ENCODE measurements at regions of chr19 and their contacts with region 1.

Region 1: GRCh38 chr19:57410877-57411671 is at the start of gene ZNF17:
- DNase-seq: peak; percentile 91
- H3K4me3 ChIP-seq: peak within 1 kb of the TSS; percentile 75 to 88 (median 87)
- H3K27ac ChIP-seq: peak within 1 kb of the TSS; percentile 30
- H3K4me1 ChIP-seq: no peaks in the 10 kb centered on the region
- H3K27me3 ChIP-seq: no peaks in the 10 kb centered on the region
- CTCF ChIP-seq: no peak
- total RNA-seq, gene ZNF17: 6.0 to 13.8 TPM

Region 2: DNA sequence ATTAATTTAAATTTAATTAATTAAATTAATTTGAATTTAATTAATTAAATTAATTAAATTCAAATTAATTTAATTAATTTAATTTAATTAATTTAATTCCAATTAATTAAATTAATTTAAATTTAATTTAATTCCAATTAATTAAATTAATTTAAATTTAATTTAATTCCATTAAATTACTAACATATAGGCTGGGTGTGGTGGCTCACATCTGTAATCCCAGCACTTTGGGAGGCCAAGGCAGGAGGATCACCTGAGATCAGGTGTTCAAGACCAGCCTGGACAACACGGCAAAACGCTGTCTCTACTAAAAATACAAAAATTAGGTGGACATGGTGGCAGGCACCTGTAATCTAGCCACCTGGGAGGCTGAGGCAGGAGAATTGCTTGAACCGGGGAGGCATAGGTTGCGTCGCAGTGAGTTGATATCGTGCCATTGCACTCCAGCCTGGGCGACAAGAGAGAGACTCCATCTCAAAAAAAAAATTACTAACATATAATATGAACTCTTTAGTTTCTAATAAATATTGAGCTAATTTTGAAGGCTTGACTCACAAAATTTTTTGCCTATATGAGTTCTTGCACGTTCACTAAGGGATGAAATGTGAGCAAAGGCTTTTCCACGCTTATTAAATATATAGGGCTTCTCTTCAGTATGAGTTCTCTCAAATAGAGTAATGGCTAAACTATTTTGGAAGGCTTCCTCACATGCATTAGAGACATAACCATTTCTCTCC is 300.3 kb before region 1 on chr19:
- CTCF ChIA-PET with region 1: no interaction called
- dilution Hi-C with region 1: no loop called
- in situ Hi-C with region 1: no loop called
- intact Hi-C with region 1: no loop called
- DNase-seq: no peak
- H3K4me3 ChIP-seq: no peak overlapping the region
- H3K27ac ChIP-seq: no peak overlapping the region
- H3K4me1 ChIP-seq: no peaks in the 10 kb centered on the region
- H3K27me3 ChIP-seq: no peaks in the 10 kb centered on the region
- CTCF ChIP-seq: no peak

Region 3: GRCh38 chr19:57389730-57390598 is 21.1 kb before region 1 on chr19 and contains the start of gene ZNF548:
- CTCF ChIA-PET with region 1: interaction called, 13 read pairs
- dilution Hi-C with region 1: no loop called
- in situ Hi-C with region 1: no loop called
- intact Hi-C with region 1: no loop called
- DNase-seq: peak; percentile 96
- H3K4me3 ChIP-seq: peak within 1 kb of the TSS; percentile 83 to 88 (median 84)
- H3K27ac ChIP-seq: peak within 1 kb of the TSS; percentile 88
- H3K4me1 ChIP-seq: peaks cover 9% of the 10 kb centered on the region
- H3K27me3 ChIP-seq: no peaks in the 10 kb centered on the region
- CTCF ChIP-seq: peak in 1 of 2 donors; percentile 30
- total RNA-seq, gene ZNF548: 15.2 to 25.8 TPM

Region 4: GRCh38 chr19:57527136-57527881 is 116.2 kb after region 1 on chr19 and contains the start of gene ZNF549:
- CTCF ChIA-PET with region 1: no interaction called
- dilution Hi-C with region 1: loop called (anchors 10 kb)
- in situ Hi-C with region 1: no loop called
- intact Hi-C with region 1: loop called (anchors 1 kb)
- DNase-seq: peak; percentile 96
- H3K4me3 ChIP-seq: peak within 1 kb of the TSS; percentile 61 to 77 (median 70)
- H3K27ac ChIP-seq: peak within 1 kb of the TSS; percentile 3
- H3K4me1 ChIP-seq: no peaks in the 10 kb centered on the region
- H3K27me3 ChIP-seq: no peaks in the 10 kb centered on the region
- CTCF ChIP-seq: no peak
- total RNA-seq, gene ZNF549: 6.1 to 7.0 TPM

Region 5: DNA sequence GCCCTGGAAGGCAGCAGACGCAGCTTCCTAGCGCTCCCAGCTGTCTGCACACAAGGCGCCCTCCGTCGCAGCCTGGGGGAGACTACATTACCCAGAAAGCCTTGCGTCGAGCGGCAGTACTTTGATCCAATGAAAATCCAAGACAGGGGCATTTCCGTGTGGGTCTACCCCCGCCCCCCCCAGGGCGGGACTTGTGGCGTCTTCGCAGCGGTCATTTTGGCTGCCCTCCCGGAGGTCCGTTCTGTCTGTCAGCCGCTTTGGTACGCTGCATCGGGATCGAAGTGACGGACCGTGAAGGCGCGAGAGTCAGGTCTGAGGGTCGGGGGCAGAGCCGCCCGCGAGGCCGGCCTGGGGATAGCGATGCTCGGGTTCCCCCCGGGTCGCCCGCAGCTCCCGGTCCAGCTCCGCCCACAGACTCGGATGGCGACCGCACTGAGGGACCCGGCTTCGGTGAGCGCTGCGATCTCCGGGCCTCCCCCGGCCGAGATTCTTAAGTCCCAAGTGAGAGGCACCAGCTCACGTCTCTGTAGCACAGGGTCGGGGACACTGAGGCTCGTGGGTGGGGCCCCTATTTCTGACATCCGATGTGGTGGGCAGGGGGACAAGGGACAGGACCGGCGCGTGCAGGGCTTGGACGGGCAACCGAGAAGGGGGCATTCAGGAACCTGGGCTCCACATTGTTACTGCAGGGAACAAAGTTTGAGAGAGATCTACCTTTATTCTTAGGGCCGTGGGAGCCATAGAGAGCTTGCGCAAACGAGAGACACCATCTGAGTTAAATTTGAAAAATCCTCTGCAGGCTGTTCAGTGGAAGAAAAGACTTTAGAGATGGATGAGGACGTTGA is 222.1 kb after region 1 on chr19 and contains the start of gene ZNF211:
- CTCF ChIA-PET with region 1: no interaction called
- dilution Hi-C with region 1: no loop called
- in situ Hi-C with region 1: no loop called
- intact Hi-C with region 1: loop called (anchors 5 kb)
- DNase-seq: peak; percentile 89
- H3K4me3 ChIP-seq: peak within 1 kb of the TSS; percentile 86 to 95 (median 93)
- H3K27ac ChIP-seq: peak within 1 kb of the TSS; percentile 72
- H3K4me1 ChIP-seq: no peaks in the 10 kb centered on the region
- H3K27me3 ChIP-seq: no peaks in the 10 kb centered on the region
- CTCF ChIP-seq: no peak
- total RNA-seq, gene ZNF211: 11.4 to 13.5 TPM

Region 6: GRCh38 chr19:57903618-57904184 is 492.6 kb after region 1 on chr19:
- CTCF ChIA-PET with region 1: no interaction called
- dilution Hi-C with region 1: no loop called
- in situ Hi-C with region 1: no loop called
- intact Hi-C with region 1: loop called (anchors 1 kb)
- DNase-seq: no peak
- H3K4me3 ChIP-seq: no peak overlapping the region
- H3K27ac ChIP-seq: no peak overlapping the region
- H3K4me1 ChIP-seq: no peaks in the 10 kb centered on the region
- H3K27me3 ChIP-seq: no peaks in the 10 kb centered on the region
- CTCF ChIP-seq: no peak